ENCODE measurements at regions of chrX and their contacts with region 1.

Region 1: GRCh38 chrX:40735325-40736169 is at the start of gene MED14:
- DNase-seq: peak; percentile 71 to 85
- ATAC-seq: peak; percentile 90 to 94
- H3K4me3 ChIP-seq: peak within 1 kb of the TSS; percentile 65 to 90 (median 78)
- H3K27ac ChIP-seq: peak within 1 kb of the TSS; percentile 90 to 98 (median 94)
- H3K4me1 ChIP-seq: peaks cover 28 to 36% of the 10 kb centered on the region in 2 donors
- H3K27me3 ChIP-seq: no peaks in the 10 kb centered on the region
- CTCF ChIP-seq: peak; percentile 42 to 76 (median 66)
- POLR2A ChIP-seq: peak; percentile 77 to 82
- total RNA-seq, gene MED14: 19.8 to 27.0 (median 24.0) TPM

Region 2: GRCh38 chrX:40685362-40685918 is 50.1 kb before region 1 on chrX:
- in situ Hi-C with region 1: no loop called
- intact Hi-C with region 1: loop called (anchors 5 kb)
- DNase-seq: no peak
- ATAC-seq: peak in 1 of 2 donors; percentile 32
- H3K4me3 ChIP-seq: no peak overlapping the region
- H3K27ac ChIP-seq: peak overlapping the region; percentile 33 to 89 (median 84)
- H3K4me1 ChIP-seq: peaks cover 47 to 49% of the 10 kb centered on the region in 2 donors
- H3K27me3 ChIP-seq: no peaks in the 10 kb centered on the region
- CTCF ChIP-seq: no peak
- POLR2A ChIP-seq: no peak

Region 3: DNA sequence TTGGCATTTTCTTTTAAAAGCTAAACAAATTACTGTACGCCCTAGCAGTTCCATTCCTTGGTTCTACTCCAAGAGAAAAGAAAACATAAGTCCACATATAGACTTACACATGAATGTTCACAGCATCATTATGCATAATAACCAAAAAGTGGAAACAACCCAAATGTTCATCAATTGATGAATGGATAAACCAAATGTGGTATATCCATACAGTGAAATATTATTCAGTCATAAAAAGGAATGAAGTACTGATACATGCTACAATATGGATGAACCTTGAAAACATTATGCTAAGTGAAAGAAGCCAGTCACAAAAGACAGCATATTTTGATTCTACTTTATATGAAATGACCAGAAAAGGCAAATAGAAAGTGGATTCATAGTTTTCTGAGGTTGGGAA is 36.7 kb before region 1 on chrX:
- in situ Hi-C with region 1: no loop called
- intact Hi-C with region 1: no loop called
- DNase-seq: no peak
- ATAC-seq: no peak
- H3K4me3 ChIP-seq: no peak overlapping the region
- H3K27ac ChIP-seq: peak overlapping the region in 1 of 4 donors; percentile 16
- H3K4me1 ChIP-seq: peaks cover 0 to 6% of the 10 kb centered on the region in 2 donors
- H3K27me3 ChIP-seq: no peaks in the 10 kb centered on the region
- CTCF ChIP-seq: no peak
- POLR2A ChIP-seq: no peak

Region 4: DNA sequence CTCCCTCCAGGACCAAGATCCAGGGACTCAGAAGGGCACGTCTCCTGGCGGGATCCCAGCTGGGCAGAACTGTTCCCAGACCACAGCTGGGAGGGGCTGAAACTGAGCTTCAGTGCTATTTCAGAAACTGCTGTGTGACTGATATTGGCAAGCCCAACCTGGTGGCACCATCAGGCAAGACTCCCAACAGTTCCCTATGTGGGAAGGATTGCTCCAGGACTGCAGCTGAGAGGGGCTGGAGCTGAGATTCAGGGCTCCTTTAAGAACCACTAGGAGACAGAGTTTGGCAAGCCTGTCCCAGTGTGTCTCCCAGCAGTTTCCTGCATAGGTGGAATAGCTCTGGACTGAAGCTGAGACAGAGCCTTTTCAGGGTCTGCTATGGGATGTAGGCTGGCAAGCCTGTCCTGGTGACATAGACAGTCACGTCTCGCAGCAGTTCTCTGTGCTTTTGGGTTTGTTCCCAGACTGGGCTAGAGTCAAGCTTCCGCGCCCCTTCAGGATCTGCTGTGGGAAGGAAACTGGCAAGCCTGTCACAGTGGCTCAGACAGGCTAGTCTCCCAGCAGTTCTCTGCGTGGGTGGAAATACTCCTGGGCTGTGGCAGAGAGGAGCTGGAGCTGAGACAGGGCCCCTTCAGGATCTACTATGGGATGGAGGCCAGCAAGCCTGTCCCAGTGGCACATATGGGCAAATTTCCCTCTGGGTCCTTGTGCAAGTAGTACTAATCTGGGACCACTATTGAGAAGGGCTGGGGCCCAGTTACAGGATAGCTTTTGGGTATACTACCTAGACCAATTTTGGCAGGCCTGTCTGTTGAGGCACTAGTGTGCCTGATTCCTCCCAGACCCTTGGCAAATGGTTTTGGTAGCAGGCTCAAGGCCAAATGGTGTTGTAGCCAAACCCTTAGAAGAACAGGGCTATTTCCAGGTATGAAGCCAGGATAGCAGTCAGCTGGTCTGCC is 20.0 kb after region 1 on chrX:
- in situ Hi-C with region 1: no loop called
- intact Hi-C with region 1: loop called (anchors 2 kb)
- DNase-seq: peak; percentile 78 to 93
- ATAC-seq: peak; percentile 92 to 94
- H3K4me3 ChIP-seq: peak overlapping the region in 3 of 4 donors; percentile 7 to 22 (median 13)
- H3K27ac ChIP-seq: peak overlapping the region; percentile 89 to 91 (median 90)
- H3K4me1 ChIP-seq: peaks cover 13 to 17% of the 10 kb centered on the region in 2 donors
- H3K27me3 ChIP-seq: no peaks in the 10 kb centered on the region
- CTCF ChIP-seq: no peak
- POLR2A ChIP-seq: no peak

Measured in gastrocnemius medialis (tissue), 4 donors.